Prostate gland (tissue), 2 donors: ENCODE measurements at regions of chr11 and their contacts with region 1.

Region 1: GRCh38 chr11:34051349-34052035 is at the start of gene CAPRIN1:
- DNase-seq: peak; percentile 80
- H3K4me3 ChIP-seq: peak within 1 kb of the TSS; percentile 94 to 97
- H3K27ac ChIP-seq: peak within 1 kb of the TSS; percentile 97 to 98
- H3K4me1 ChIP-seq: peaks cover 5% of the 10 kb centered on the region
- H3K27me3 ChIP-seq: no peaks in the 10 kb centered on the region
- CTCF ChIP-seq: peak in 1 of 4 experiments; percentile 26
- POLR2A ChIP-seq: peak; percentile 57
- total RNA-seq, gene CAPRIN1: 145 to 199 TPM

Region 2: DNA sequence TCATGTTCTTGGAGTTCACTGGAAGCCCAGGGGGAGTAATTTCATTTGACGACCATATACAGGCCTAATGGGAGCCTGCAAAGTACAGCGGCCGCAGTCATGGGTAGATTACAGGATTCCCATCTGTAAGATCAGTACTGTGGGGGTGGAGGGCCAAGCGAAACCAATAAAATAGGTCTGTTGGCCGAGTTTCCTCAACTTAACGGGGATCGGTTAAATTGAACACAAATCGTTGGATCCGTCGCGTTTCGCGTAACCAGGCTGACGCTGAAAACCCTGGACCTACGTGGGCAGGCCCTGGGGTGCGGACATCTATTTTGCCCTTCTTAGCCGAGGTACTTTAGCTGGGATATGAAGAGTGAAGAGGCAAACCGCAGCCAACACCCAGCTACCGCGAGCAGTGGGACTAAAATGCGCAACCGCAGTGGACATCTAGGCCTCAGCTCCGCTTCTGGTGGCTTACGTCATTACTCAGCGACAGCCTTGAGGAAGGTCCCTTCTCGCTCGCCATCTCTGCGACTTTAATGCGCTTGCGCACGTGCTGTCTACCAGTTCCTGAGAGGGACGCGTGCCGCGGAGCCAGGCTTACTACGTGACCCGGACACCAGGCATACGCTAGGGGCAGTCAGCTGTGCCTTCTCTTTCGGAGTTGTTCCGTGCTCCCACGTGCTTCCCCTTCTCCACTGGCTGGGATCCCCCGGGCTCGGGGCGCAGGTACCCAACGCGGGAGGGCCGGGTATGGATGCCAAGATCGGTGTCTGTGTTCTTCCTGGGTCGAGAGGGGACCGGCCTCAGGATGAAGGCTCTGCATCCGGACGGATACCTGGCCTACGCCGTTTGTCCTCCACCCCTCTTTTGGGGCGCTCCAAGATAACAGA is 53.8 kb after region 1 on chr11 and contains the start of gene NAT10:
- intact Hi-C with region 1: loop called (anchors 1 kb)
- DNase-seq: peak; percentile 95
- H3K4me3 ChIP-seq: peak within 1 kb of the TSS; percentile 54 to 66
- H3K27ac ChIP-seq: peak within 1 kb of the TSS; percentile 91 to 94
- H3K4me1 ChIP-seq: peaks cover 4% of the 10 kb centered on the region
- H3K27me3 ChIP-seq: no peaks in the 10 kb centered on the region
- CTCF ChIP-seq: peak in 1 of 4 experiments; percentile 19
- POLR2A ChIP-seq: peak; percentile 72
- total RNA-seq, gene NAT10: 21.9 to 34.7 TPM